Activated T-helper 1 cell treated with anti-CD3 and anti-CD28 coated beads, Interleukin-12 subunit alpha, Interleukin-12 subunit beta, Interleukin-2, Interleukin-4 antibody, amounts not matched to agents 30 ng/mL and 10 ng/mL and 1 ng/mL, durations not matched to agents 14 hours and 24 hours and 36 hours (primary cell): ENCODE measurements at regions of chr16 and their contacts with region 1.

Region 1: DNA sequence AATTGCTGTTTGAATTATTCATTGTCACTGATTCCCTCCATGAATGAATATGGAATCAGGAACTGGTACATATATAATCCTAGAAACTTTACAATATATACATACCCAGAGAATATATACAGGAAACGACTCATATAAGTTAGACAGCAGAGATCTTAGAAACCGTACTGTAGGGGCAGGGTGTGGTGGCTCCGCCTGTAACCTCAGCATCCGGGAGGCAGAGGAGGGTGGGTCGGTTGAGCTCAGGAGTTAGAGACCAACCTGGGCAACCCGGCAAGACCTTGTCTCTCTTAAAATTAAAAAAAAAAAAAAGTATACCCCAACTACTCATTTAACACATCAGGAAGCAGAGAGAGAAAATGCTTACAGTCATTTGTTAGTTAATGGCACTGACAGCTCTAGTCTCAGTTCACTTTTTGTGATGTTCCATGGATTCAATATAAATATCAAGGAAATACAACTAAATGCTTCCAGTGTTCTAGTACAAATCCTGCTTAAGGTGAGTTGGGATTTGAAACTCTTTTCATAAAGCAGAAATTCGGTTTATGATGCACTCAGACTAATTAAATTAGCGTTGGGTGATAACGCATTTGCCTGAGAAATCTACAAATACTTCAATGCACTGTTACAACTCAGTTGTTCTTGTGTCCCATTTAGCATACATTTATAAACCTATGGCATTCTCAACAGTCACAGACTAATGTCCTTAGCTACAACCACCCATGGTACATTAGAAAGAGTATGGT is 5.6 kb downstream of the GLG1 start:
- DNase-seq: peak; percentile 66
- H3K4me3 Mint-ChIP-seq: peak overlapping the region; percentile 77
- H3K27ac Mint-ChIP-seq: peak overlapping the region; percentile 77
- H3K4me1 Mint-ChIP-seq: peaks cover 70% of the 10 kb centered on the region
- H3K27me3 Mint-ChIP-seq: no peaks in the 10 kb centered on the region

Region 2: DNA sequence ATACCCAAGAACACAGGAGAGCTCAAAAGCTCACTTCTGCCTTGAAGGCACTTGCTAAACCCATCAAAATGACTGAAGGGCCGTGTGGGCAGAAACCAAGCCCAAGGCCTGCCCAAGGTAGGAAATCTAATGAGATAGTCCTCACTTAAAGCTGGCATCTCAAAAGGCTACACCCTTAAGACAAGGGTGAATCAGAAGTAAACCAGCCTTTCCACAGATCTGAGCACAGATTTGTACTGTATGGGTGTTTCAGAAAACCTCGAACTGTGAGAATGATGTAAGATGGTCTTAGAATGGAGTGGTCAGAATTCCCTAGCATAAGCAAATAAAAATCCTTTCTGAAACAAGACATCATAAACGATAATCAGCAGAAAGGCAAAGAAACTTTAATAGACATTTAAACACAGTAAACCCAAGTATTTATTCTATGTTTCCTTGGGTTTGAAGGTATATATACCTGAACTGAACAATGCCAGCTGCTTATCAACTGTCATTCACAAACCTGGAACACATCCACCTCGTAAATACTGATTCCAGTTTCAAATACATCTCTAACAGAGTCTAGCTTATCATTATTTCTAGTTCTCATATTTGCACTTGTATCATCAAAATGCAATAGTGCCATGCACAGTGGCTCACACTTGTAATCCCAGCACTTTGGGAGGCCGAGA is 32.2 kb before region 1 on chr16:
- intact Hi-C with region 1: loop called (anchors 5 kb)
- DNase-seq: no peak
- H3K4me3 Mint-ChIP-seq: no peak overlapping the region
- H3K27ac Mint-ChIP-seq: no peak overlapping the region
- H3K4me1 Mint-ChIP-seq: peaks cover 29% of the 10 kb centered on the region
- H3K27me3 Mint-ChIP-seq: no peaks in the 10 kb centered on the region

Region 3: GRCh38 chr16:74577882-74578366 is 23.4 kb before region 1 on chr16:
- intact Hi-C with region 1: loop called (anchors 1 kb)
- DNase-seq: no peak
- H3K4me3 Mint-ChIP-seq: no peak overlapping the region
- H3K27ac Mint-ChIP-seq: no peak overlapping the region
- H3K4me1 Mint-ChIP-seq: peaks cover 43% of the 10 kb centered on the region
- H3K27me3 Mint-ChIP-seq: no peaks in the 10 kb centered on the region